Activated CD4-positive, alpha-beta T cell treated with anti-CD3 and anti-CD28 coated beads, Interleukin-2, amount 10 ng/mL, durations not matched to agents 7 days and 5 days (primary cell): ENCODE measurements at regions of chr13 and their contacts with region 1.

Region 1: DNA sequence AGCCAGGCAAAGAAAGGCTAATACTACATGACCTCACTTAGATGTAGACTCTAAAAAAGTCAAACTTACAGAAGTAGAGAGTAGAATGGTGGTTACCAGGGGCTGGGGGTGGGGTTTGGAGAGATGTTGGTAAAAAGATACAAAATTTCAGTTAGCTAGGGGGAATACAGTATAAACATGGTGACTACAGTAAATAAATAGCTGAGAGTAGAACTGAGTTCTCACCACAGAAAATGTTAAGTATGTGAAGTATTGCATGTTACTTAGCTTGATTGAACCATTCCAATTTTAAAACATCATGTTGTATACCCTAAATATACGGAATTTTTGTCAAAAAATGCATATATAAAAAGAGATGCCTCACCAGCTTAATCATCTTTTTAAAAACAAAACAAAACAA is 67.5 kb upstream of the DOCK9 start:
- DNase-seq: no peak
- H3K4me3 Mint-ChIP-seq: peak overlapping the region; percentile 60
- H3K27ac Mint-ChIP-seq: peak overlapping the region; percentile 94
- H3K4me1 Mint-ChIP-seq: peaks cover 99% of the 10 kb centered on the region
- H3K27me3 Mint-ChIP-seq: no peaks in the 10 kb centered on the region

Region 2: GRCh38 chr13:99028890-99029289 is 16.5 kb before region 1 on chr13:
- CTCF ChIA-PET with region 1: interaction called, 21 read pairs
- POLR2A ChIA-PET with region 1: no interaction called
- DNase-seq: peak; percentile 66
- H3K4me3 Mint-ChIP-seq: no peak overlapping the region
- H3K27ac Mint-ChIP-seq: no peak overlapping the region
- H3K4me1 Mint-ChIP-seq: peaks cover 71% of the 10 kb centered on the region
- H3K27me3 Mint-ChIP-seq: no peaks in the 10 kb centered on the region